A673 (cell line): ENCODE measurements at regions of chr14 and their contacts with region 1.

Region 1: GRCh38 chr14:24710403-24711112 is 76.6 kb upstream of the GZMB start:
- DNase-seq: peak; percentile 79
- H3K4me3 ChIP-seq: no peak overlapping the region
- H3K27ac ChIP-seq: no peak overlapping the region
- H3K4me1 ChIP-seq: no peaks in the 10 kb centered on the region
- H3K27me3 ChIP-seq: no peaks in the 10 kb centered on the region
- CTCF ChIP-seq: peak; percentile 87

Region 2: GRCh38 chr14:24093901-24094761 is 616.4 kb before region 1 on chr14 and contains the start of gene PCK2:
- CTCF ChIA-PET with region 1: no interaction called
- POLR2A ChIA-PET with region 1: no interaction called
- intact Hi-C with region 1: no loop called
- DNase-seq: peak; percentile 94
- H3K4me3 ChIP-seq: peak within 1 kb of the TSS; percentile 78
- H3K27ac ChIP-seq: peak within 1 kb of the TSS; percentile 94
- H3K4me1 ChIP-seq: peaks cover 12% of the 10 kb centered on the region
- H3K27me3 ChIP-seq: no peaks in the 10 kb centered on the region
- CTCF ChIP-seq: 0 out of 2 replicates have a peak, but pooled peaks have one; percentile 9
- total RNA-seq, gene PCK2: 16.8 and 46.3 TPM in 2 replicates

Region 3: DNA sequence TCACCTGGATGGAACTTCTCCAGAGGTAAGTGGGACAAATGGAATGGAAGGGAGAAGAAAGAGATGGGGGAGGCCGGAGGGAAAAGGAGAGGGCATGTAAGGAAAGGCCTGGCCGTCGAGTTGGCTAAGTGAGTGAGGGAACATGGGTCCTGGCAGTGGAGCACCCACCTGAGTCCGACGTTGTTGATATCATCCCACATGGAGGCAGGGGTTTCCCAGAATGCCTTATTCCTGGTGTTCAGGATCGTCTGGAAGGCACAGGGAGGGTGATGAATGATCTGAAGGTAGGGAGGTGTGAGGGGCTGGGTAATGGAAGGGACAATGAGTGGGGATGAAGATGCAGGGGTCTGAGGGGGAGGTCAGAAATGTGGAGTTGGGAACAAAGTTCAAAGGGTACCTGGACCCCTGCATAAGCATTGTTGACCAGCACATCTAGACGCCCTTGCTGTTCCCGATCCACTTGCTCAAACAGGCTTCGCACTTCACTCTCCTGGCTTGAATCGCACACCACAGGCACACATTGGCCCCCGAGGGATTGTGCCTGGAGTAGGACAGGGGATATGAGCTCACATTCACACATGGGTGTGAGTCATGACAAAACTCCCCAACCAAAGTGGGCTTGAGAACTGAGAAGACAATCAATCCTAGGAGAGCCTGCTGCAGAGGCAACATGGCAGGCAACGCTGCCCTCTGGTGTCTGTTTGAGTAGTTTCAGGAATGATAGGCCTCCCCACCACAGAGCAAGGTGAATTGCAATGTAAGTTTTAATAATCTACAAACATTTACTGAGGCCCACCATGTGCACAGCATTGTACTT is 414.0 kb before region 1 on chr14:
- CTCF ChIA-PET with region 1: no interaction called
- POLR2A ChIA-PET with region 1: no interaction called
- intact Hi-C with region 1: no loop called
- DNase-seq: peak; percentile 87
- H3K4me3 ChIP-seq: no peak overlapping the region
- H3K27ac ChIP-seq: no peak overlapping the region
- H3K4me1 ChIP-seq: no peaks in the 10 kb centered on the region
- H3K27me3 ChIP-seq: no peaks in the 10 kb centered on the region
- CTCF ChIP-seq: peak; percentile 76

Region 4: DNA sequence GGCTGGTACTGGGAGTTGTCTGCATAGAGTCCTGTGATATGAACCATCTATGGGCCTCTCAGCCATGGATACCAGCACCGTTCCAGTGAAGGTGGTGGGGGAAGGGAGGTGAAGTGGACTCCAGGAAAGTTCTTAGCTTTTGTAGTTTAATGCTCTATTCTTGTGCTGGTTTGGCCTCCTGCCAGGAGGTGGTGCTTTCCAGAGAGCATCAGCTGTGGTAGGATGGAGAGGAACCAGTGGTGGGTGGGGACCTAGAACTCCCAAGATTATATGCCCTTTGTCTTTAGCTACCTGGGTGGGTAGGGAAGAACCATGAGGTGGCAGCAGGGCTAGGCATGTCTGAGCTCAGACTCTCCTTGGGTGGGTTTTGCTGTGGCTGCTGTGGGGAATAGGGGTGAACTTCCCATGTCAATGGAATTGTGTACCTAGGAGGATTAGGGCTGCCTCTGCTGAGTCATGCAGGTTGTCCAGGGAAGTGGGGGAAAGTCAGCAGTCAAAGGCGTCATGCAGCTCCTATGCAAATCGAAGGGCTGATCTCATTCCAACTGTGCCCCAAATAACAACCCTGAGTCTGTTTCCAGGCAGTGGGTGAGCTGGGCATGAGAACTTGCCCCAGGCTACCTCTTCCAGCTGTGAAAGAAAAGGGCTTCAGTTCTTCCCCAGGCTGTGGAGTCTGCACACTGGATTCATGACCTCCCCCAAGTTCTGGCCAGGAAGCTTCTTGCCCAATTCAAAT is 115.3 kb before region 1 on chr14:
- CTCF ChIA-PET with region 1: interaction called, 17 read pairs
- POLR2A ChIA-PET with region 1: no interaction called
- intact Hi-C with region 1: no loop called
- DNase-seq: no peak
- H3K4me3 ChIP-seq: no peak overlapping the region
- H3K27ac ChIP-seq: no peak overlapping the region
- H3K4me1 ChIP-seq: no peaks in the 10 kb centered on the region
- H3K27me3 ChIP-seq: no peaks in the 10 kb centered on the region
- CTCF ChIP-seq: no peak

Region 5: DNA sequence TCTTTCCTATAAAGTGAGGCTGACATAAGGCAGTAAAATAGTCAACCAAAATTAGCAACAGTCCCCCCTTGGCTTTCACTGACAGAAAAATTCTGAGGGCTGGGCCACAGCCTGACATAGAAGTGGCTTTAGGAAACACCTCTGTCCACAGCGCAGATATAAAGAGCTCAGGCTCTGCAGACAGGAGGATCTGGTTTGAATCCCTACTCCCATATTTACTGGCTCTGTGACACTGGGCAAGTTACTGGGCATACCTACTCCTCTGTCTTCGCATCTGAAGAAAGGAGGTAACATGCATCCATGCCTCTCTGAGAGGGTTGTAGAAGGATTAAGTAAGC is 244.1 kb after region 1 on chr14:
- CTCF ChIA-PET with region 1: no interaction called
- POLR2A ChIA-PET with region 1: no interaction called
- intact Hi-C with region 1: no loop called
- DNase-seq: no peak
- H3K4me3 ChIP-seq: no peak overlapping the region
- H3K27ac ChIP-seq: no peak overlapping the region
- H3K4me1 ChIP-seq: no peaks in the 10 kb centered on the region
- H3K27me3 ChIP-seq: no peaks in the 10 kb centered on the region
- CTCF ChIP-seq: no peak

Region 6: DNA sequence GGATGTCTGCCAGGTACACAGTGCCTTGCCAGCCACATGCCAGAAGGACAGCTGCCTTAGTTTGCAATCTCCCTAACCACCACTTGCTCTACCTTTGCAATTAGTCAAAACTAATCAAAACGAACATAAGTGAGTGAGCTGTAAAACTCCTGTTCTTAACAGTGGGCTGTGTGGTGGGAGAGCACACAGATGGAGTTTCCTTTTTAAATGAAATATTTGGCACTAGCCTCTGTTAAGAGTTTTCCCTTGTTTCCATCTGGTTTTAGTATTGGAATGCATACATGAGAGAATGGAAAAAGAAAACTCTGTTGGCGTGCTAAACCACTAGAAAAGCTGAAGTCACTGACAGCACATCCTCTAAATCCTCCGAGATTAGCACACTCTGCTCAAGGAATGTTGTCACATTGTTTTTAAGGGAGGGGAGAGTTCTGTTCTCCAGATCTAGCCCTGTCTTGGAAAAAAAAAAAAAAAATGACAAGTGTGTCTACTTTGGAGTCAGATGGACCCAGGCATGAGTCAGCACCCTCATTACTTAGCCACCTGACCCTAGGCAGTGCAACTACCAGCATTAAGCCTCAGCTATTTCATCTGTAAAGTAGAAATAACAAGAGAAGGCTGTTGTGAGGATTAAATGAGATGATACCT is 255.5 kb after region 1 on chr14:
- CTCF ChIA-PET with region 1: no interaction called
- POLR2A ChIA-PET with region 1: no interaction called
- intact Hi-C with region 1: no loop called
- DNase-seq: peak; percentile 7
- H3K4me3 ChIP-seq: no peak overlapping the region
- H3K27ac ChIP-seq: no peak overlapping the region
- H3K4me1 ChIP-seq: no peaks in the 10 kb centered on the region
- H3K27me3 ChIP-seq: no peaks in the 10 kb centered on the region
- CTCF ChIP-seq: no peak

Region 7: DNA sequence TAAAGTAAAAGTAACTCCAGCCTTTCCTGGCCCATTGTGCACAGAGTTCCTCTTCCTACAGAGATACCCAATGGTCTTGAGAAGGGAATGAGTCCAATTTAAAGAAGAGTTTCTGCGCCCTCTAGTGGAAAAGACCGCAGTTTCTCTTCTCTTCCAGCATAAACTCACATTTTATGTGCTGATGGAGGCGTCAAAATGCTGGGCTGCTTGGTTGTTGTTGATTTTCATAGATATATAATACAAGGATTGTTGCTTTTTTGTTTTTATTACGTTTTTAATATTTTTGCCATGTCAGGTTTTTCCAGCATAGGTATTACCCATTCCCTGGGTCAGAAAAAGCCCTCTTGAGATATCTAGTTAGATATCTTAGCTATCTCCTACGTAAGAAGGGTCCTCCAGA is 696.3 kb after region 1 on chr14:
- CTCF ChIA-PET with region 1: interaction called, 4 read pairs
- POLR2A ChIA-PET with region 1: no interaction called
- intact Hi-C with region 1: loop called (anchors 2 kb)
- DNase-seq: peak; percentile 83
- H3K4me3 ChIP-seq: no peak overlapping the region
- H3K27ac ChIP-seq: no peak overlapping the region
- H3K4me1 ChIP-seq: peaks cover 6% of the 10 kb centered on the region
- H3K27me3 ChIP-seq: peaks cover 8% of the 10 kb centered on the region
- CTCF ChIP-seq: peak; percentile 82